ENCODE measurements at regions of chr7 and their contacts with region 1.

Region 1: DNA sequence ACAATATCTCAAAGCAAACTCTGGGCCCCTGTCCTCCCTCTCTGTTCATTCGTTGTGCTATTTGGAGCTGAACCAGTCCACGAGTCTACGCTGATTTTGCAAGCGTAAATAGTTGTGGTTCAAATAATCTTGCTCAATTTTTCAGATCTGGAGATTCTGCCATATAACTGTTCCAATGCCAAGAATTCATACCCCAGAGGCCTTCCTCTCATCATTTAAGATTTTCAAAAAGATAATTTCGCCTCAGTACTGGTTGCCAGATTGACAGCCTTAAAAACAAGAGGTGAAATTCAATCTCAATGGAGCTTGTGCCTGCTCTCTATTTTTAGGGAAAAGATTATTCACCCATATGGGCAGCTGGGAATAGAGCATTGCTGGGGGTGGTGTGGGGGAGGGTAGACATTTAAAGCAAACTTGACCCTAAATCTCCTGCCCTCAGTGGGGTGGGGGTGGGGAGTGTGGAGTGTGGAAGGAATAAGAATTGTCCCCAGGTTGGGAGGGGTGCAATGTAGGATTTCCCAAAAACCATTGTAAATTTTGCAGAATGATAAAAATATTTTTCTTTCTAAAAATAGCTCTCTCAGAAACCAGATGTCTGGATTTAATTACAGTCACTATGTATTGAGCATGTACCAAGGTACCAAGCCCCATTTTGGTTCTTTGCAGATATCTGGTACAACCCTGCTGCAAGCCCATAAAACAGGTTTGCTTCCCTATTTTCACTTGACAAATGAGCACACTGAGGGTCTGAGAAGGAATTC is 104.7 kb upstream of the EEPD1 start:
- DNase-seq: peak in 1 of 5 donors; percentile 35
- ATAC-seq: peak; percentile 77 to 87 (median 84)
- H3K4me3 ChIP-seq: peak overlapping the region in 2 of 12 donors; percentile 5 to 13
- H3K27ac ChIP-seq: peak overlapping the region in 11 of 12 donors; percentile 3 to 83 (median 63)
- H3K4me1 ChIP-seq: peaks cover 2 to 61% (median 39%) of the 10 kb centered on the region in 12 donors
- H3K27me3 ChIP-seq: no peaks in the 10 kb centered on the region
- CTCF ChIP-seq: no peak
- POLR2A ChIP-seq: no peak

Region 2: DNA sequence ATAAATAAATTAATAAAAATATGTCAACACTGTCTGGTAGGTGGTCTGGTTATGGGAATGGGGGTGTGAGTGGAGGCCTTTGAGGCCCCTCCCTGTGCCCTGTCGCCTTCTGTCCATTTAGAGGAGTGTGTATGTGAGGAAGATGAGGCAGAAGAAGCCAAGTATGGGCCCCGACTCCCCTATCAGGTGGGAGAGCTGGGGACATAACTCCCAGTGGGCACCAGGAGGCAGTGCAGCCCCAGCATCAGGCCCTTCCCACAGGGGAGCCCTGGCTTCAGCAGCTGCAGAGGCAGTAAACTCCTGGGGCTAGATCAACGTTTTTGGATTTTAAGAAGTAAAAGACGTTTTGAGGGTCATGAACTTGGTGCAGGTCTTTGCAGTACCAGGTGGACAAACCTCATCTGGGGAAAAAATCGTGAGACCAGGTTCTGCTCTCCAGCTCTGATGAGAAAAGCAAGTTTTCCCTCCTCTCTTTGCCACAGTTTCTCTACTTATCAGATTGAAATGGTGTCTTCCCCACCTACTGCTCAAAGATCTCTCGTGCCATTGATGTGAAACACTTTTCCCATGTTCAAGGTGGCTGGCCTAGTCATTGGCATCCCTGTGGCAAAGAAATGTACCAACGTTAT is 63.1 kb before region 1 on chr7:
- intact Hi-C with region 1: no loop called
- DNase-seq: peak; percentile 83 to 88 (median 84)
- ATAC-seq: peak; percentile 94 to 99 (median 96)
- H3K4me3 ChIP-seq: no peak overlapping the region
- H3K27ac ChIP-seq: no peak overlapping the region
- H3K4me1 ChIP-seq: peaks cover 0 to 3% (median 0%) of the 10 kb centered on the region in 12 donors
- H3K27me3 ChIP-seq: no peaks in the 10 kb centered on the region
- CTCF ChIP-seq: peak; percentile 87 to 97 (median 92)
- POLR2A ChIP-seq: no peak

Region 3: GRCh38 chr7:36115448-36116321 is 67.4 kb after region 1 on chr7:
- intact Hi-C with region 1: loop called in 1 of 10 experiments (anchors 5 kb)
- DNase-seq: peak; percentile 49 to 86 (median 63)
- ATAC-seq: peak; percentile 47 to 83 (median 62)
- H3K4me3 ChIP-seq: no peak overlapping the region
- H3K27ac ChIP-seq: peak overlapping the region in 8 of 12 donors; percentile 3 to 60 (median 48)
- H3K4me1 ChIP-seq: peaks cover 0 to 55% (median 28%) of the 10 kb centered on the region in 12 donors
- H3K27me3 ChIP-seq: no peaks in the 10 kb centered on the region
- CTCF ChIP-seq: no peak
- POLR2A ChIP-seq: no peak

Region 4: GRCh38 chr7:36128448-36129047 is 80.2 kb after region 1 on chr7:
- intact Hi-C with region 1: loop called in 1 of 10 experiments (anchors 5 kb)
- DNase-seq: peak; percentile 72 to 90 (median 77)
- ATAC-seq: peak; percentile 88 to 95 (median 92)
- H3K4me3 ChIP-seq: peak overlapping the region in 5 of 12 donors; percentile 1 to 18 (median 6)
- H3K27ac ChIP-seq: peak overlapping the region; percentile 66 to 90 (median 80)
- H3K4me1 ChIP-seq: peaks cover 0 to 51% (median 28%) of the 10 kb centered on the region in 12 donors
- H3K27me3 ChIP-seq: no peaks in the 10 kb centered on the region
- CTCF ChIP-seq: peak; percentile 54 to 88 (median 72)
- POLR2A ChIP-seq: no peak

Measured in heart left ventricle (tissue), 16 donors.